Mammary epithelial cell (primary cell): ENCODE measurements at regions of chr16 and their contacts with region 1.

Region 1: GRCh38 chr16:86554917-86555703 is at the start of gene MTHFSD:
- DNase-seq: peak; percentile 85
- H3K4me3 ChIP-seq: peak within 1 kb of the TSS; percentile 75 to 93 (median 90)
- H3K27ac ChIP-seq: peak within 1 kb of the TSS; percentile 81
- H3K4me1 ChIP-seq: peaks cover 14% of the 10 kb centered on the region
- H3K27me3 ChIP-seq: no peaks in the 10 kb centered on the region
- CTCF ChIP-seq: no peak
- total RNA-seq, gene MTHFSD: 17.3 to 25.4 TPM

Region 2: GRCh38 chr16:86457501-86458148 is 97.5 kb before region 1 on chr16:
- CTCF ChIA-PET with region 1: no interaction called
- dilution Hi-C with region 1: no loop called
- in situ Hi-C with region 1: no loop called
- intact Hi-C with region 1: no loop called
- DNase-seq: no peak
- H3K4me3 ChIP-seq: no peak overlapping the region
- H3K27ac ChIP-seq: no peak overlapping the region
- H3K4me1 ChIP-seq: no peaks in the 10 kb centered on the region
- H3K27me3 ChIP-seq: no peaks in the 10 kb centered on the region
- CTCF ChIP-seq: no peak

Region 3: GRCh38 chr16:87086156-87086555 is 531.0 kb after region 1 on chr16:
- CTCF ChIA-PET with region 1: no interaction called
- dilution Hi-C with region 1: loop called (anchors 5 kb)
- in situ Hi-C with region 1: no loop called
- intact Hi-C with region 1: no loop called
- DNase-seq: no peak
- H3K4me3 ChIP-seq: no peak overlapping the region
- H3K27ac ChIP-seq: no peak overlapping the region
- H3K4me1 ChIP-seq: no peaks in the 10 kb centered on the region
- H3K27me3 ChIP-seq: no peaks in the 10 kb centered on the region
- CTCF ChIP-seq: no peak

Region 4: DNA sequence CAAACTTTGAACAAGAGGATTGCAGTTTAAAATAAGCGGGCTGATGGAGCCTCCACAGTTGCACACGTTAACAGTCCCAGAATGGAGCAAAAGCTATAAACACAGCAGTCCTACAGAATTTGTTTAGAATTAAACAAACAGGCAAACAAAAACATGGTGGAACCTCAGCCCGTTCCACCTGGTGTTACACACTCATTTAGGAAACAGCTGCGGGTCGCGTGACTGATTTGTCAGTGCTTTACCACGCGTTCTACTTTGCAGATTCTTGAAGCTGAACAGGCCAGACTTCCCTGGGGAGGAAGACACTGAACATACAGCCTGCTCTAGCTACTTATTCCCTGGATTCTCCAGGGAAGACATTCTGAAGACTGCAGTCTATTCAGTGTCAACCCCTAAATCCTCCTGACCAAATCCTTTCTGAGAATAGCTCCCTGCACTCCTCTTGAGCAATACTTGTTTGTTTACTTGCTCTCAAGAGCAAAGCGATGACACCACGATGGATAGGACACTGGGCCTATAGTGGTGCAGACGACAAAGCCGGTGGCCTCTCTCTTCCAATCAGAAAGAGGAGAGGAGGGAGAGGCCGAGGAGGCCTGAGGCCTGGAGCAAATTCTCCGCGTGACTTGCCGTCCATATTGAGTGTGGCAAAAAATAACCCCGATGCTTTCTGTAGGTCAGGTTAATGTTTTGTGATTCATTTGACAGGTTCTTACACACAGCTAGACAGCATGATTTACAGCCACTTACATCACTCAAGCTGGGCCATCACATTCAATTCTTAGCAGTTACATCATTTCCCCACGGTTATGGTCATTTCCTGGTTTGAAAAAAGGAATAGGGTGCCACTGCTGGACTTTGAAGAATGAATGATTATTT is 833.1 kb after region 1 on chr16:
- CTCF ChIA-PET with region 1: no interaction called
- dilution Hi-C with region 1: loop called (anchors 10 kb)
- in situ Hi-C with region 1: loop called in 1 of 2 experiments (anchors 25 kb)
- intact Hi-C with region 1: no loop called
- DNase-seq: peak; percentile 99
- H3K4me3 ChIP-seq: peak overlapping the region in 1 of 3 experiments; percentile 20
- H3K27ac ChIP-seq: peak overlapping the region; percentile 62
- H3K4me1 ChIP-seq: peaks cover 26% of the 10 kb centered on the region
- H3K27me3 ChIP-seq: no peaks in the 10 kb centered on the region
- CTCF ChIP-seq: no peak